ENCODE measurements at regions of chr18 and their contacts with region 1.

Region 1: GRCh38 chr18:53864770-53865169 is 359.7 kb downstream of the MBD2 start:
- DNase-seq: peak; percentile 51
- ATAC-seq: peak; percentile 76
- H3K4me3 ChIP-seq: no peak overlapping the region
- H3K27ac ChIP-seq: no peak overlapping the region
- H3K4me1 ChIP-seq: no peaks in the 10 kb centered on the region
- H3K27me3 ChIP-seq: peaks cover 23% of the 10 kb centered on the region
- CTCF ChIP-seq: peak; percentile 54

Region 2: DNA sequence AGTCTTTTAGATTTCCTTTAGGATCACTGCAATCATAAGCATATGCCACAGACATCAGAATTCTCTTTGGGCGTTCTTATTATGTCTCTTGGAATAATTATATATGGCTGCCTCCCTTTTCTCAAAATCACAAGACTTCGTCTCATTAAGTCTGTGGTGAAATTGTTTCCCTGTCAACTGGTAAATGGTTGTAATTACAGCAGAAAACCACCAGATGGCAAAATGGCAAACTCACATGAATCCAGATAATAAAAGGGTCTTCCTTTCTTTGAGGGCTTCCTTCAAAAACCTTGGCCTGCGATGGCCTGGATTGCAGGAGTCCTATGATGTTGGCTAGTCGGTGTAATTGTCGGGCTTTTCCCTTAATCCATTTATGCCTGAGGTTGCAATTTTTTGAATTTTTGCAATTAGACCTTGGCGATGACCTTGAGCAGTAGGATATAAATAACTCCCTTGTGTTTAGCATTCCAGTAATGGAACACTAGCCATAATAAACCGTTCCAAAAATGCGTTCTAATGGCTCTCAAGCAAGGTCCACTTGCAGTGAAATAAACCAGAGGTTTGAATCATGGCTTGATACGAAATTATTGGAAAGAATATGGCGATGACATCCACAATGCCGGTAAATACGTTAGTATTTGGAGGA is 296.7 kb before region 1 on chr18:
- CTCF ChIA-PET with region 1: no interaction called
- POLR2A ChIA-PET with region 1: no interaction called
- intact Hi-C with region 1: loop called (anchors 1 kb)
- DNase-seq: peak; percentile 43
- ATAC-seq: no peak
- H3K4me3 ChIP-seq: no peak overlapping the region
- H3K27ac ChIP-seq: no peak overlapping the region
- H3K4me1 ChIP-seq: no peaks in the 10 kb centered on the region
- H3K27me3 ChIP-seq: peaks cover 14% of the 10 kb centered on the region
- CTCF ChIP-seq: peak; percentile 67

Region 3: GRCh38 chr18:53698907-53699306 is 165.9 kb before region 1 on chr18:
- CTCF ChIA-PET with region 1: interaction called, 7 read pairs
- POLR2A ChIA-PET with region 1: no interaction called
- intact Hi-C with region 1: loop called (anchors 1 kb)
- DNase-seq: peak; percentile 60
- ATAC-seq: peak; percentile 84
- H3K4me3 ChIP-seq: no peak overlapping the region
- H3K27ac ChIP-seq: no peak overlapping the region
- H3K4me1 ChIP-seq: no peaks in the 10 kb centered on the region
- H3K27me3 ChIP-seq: peaks cover 27% of the 10 kb centered on the region
- CTCF ChIP-seq: peak; percentile 85

Region 4: GRCh38 chr18:53745224-53745967 is 119.4 kb before region 1 on chr18:
- CTCF ChIA-PET with region 1: no interaction called
- POLR2A ChIA-PET with region 1: no interaction called
- intact Hi-C with region 1: no loop called
- DNase-seq: peak; percentile 93
- ATAC-seq: peak; percentile 91
- H3K4me3 ChIP-seq: peak overlapping the region; percentile 13; the same call in 1 of the 2 replicates
- H3K27ac ChIP-seq: peak overlapping the region; percentile 69
- H3K4me1 ChIP-seq: peaks cover 45% of the 10 kb centered on the region
- H3K27me3 ChIP-seq: no peaks in the 10 kb centered on the region
- CTCF ChIP-seq: no peak